OCI-LY7 (cell line): ENCODE measurements at regions of chr6 and their contacts with region 1.

Region 1: DNA sequence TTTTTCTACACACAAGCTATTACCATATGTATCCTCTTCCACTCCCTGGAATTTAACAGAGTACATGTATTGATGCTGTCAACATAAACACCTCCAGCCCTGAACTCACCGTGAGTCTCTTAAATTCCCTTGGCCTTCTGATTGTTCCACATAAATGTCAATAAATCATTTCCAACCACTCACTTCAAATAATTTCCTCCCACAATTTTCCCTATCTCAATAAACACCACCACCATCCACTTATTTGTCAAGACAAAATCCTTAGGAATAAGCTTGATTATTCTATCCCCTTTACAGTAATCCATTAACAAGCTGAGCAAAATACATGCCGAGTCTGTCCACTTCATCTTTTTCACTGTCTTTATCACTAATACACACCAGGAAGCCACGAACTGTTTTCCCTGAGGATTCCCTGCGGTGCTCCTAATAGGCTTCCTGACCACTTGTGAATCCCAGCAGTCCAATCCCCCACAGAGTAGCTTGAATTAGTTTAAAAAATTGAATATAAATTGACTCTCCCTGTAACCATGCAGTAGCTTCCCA is 19.2 kb downstream of the HLA-DRB1 start:
- DNase-seq: no peak
- H3K4me3 ChIP-seq: no peak overlapping the region
- H3K27ac ChIP-seq: no peak overlapping the region
- H3K4me1 ChIP-seq: no peaks in the 10 kb centered on the region
- CTCF ChIP-seq: no peak

Region 2: GRCh38 chr6:32387589-32388340 is 182.7 kb before region 1 on chr6:
- CTCF ChIA-PET with region 1: no interaction called
- POLR2A ChIA-PET with region 1: no interaction called
- intact Hi-C with region 1: no loop called
- DNase-seq: no peak
- H3K4me3 ChIP-seq: no peak overlapping the region
- H3K27ac ChIP-seq: no peak overlapping the region
- H3K4me1 ChIP-seq: peaks cover 11% of the 10 kb centered on the region
- CTCF ChIP-seq: no peak

Region 3: GRCh38 chr6:32483968-32484636 is 86.3 kb before region 1 on chr6:
- CTCF ChIA-PET with region 1: no interaction called
- POLR2A ChIA-PET with region 1: interaction called, 10 read pairs
- intact Hi-C with region 1: no loop called
- DNase-seq: no peak
- H3K4me3 ChIP-seq: no peak overlapping the region
- H3K27ac ChIP-seq: no peak overlapping the region
- H3K4me1 ChIP-seq: peaks cover 5% of the 10 kb centered on the region
- CTCF ChIP-seq: no peak